PC-3 (cell line): ENCODE measurements at regions of chr20 and their contacts with region 1.

Region 1: DNA sequence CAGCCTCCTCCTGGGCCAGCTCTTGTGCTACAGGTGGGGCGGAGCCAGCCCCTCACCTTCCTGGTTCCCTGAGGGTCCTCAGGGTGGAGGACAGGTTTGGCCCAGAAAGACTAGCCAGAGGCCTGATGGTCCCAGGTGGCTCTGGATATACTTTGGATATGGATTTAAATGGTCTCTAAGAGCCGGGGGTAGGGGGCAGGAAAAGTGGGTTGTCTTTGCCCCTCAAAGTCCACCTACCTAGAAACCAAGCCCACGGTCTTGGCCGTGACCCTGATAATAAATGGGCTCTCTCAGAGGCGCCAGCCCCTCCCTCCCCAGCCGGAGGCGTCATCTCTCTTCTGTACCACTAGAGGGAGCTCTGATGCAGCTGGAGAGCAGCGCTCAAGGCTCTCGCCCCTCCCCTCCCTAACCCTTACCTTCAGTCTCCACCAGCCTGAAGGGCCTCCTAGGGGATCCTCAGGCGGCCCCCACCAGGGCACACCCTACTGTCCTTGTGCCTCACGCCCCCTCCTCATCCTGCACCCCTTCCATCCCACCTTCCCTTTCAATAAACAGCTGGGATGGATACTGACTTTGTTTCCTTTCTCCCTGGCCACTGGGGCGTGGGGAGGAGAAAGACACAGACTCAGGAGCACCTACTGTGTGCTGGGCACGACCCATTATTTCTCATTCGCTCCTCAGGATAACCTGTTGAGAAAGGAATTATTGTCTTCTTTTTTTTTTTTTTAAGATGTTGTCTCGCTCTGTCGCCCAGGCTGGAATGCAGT is 7.6 kb downstream of the NRSN2 start:
- DNase-seq: peak; percentile 93
- ATAC-seq: peak; percentile 93
- H3K4me3 ChIP-seq: no peak overlapping the region
- H3K27ac ChIP-seq: no peak overlapping the region
- H3K4me1 ChIP-seq: no peaks in the 10 kb centered on the region
- H3K27me3 ChIP-seq: no peaks in the 10 kb centered on the region
- CTCF ChIP-seq: peak; percentile 98

Region 2: DNA sequence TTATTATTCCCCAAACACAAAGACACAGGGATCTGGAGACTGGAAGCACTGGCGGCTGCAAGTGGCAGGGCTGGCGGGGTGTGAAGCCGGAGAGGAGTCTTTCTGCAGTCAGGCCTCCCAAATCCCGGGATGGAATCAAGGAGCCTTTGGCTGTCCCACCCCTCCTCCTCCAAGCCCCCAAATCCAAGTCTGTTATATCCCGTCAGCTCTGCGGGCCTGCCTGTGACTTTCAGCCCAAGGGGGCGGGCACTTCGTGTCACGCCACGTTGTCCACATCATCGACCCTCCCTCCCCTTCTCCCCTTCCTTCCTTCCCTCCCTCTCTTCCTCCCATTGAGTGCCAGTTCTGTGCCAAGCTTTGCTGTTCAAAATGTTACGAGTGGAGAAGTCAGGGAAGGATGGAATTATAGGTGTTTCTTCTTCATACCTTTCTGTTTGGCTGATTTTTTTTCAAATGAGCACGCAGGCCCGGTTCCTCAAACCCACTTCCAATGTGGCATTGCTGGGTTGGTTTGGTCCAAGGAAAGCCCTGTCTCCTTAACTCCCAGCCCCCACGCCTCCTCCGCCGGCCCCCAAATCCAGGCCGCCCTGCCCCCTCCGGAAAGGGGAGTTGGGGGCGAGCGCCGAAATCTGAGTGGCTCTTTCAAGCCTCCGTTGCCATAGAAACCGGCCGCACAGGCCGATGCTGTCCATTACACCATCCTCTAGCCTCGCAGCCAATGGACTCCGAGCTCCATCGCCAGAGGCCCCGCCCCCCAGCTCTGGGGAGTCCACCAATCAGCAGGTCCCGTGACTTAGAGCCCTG is 44.4 kb before region 1 on chr20:
- CTCF ChIA-PET with region 1: no interaction called
- POLR2A ChIA-PET with region 1: no interaction called
- intact Hi-C with region 1: no loop called
- DNase-seq: no peak
- ATAC-seq: no peak
- H3K4me3 ChIP-seq: no peak overlapping the region
- H3K27ac ChIP-seq: no peak overlapping the region
- H3K4me1 ChIP-seq: peaks cover 17% of the 10 kb centered on the region
- H3K27me3 ChIP-seq: no peaks in the 10 kb centered on the region
- CTCF ChIP-seq: no peak

Region 3: GRCh38 chr20:431012-431904 is 76.8 kb after region 1 on chr20:
- CTCF ChIA-PET with region 1: interaction called, 20 read pairs
- POLR2A ChIA-PET with region 1: no interaction called
- intact Hi-C with region 1: loop called (anchors 1 kb)
- DNase-seq: peak; percentile 91
- ATAC-seq: peak; percentile 82
- H3K4me3 ChIP-seq: no peak overlapping the region
- H3K27ac ChIP-seq: no peak overlapping the region
- H3K4me1 ChIP-seq: no peaks in the 10 kb centered on the region
- H3K27me3 ChIP-seq: no peaks in the 10 kb centered on the region
- CTCF ChIP-seq: peak; percentile 99

Region 4: DNA sequence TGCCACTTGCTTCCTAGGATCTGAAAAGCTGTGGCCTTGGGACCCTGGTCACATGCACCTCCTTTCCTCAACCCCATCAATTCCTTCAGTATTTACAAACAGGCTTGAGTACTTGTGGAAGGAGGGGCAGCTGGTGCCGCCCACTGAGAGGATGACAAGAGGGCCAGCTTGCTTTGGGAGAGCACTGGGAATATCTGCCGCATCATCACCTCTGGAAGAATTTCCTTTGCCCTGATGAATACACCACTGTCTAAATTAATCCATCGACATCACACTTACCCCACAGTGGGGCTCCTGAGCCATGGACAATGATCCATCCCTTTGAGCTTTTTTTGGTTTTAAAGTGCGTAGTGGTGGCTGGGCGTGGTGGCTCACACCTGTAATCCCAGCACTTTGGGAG is 82.0 kb after region 1 on chr20:
- CTCF ChIA-PET with region 1: interaction called, 20 read pairs
- POLR2A ChIA-PET with region 1: no interaction called
- intact Hi-C with region 1: loop called (anchors 1 kb)
- DNase-seq: no peak
- ATAC-seq: no peak
- H3K4me3 ChIP-seq: no peak overlapping the region
- H3K27ac ChIP-seq: no peak overlapping the region
- H3K4me1 ChIP-seq: no peaks in the 10 kb centered on the region
- H3K27me3 ChIP-seq: no peaks in the 10 kb centered on the region
- CTCF ChIP-seq: no peak

Region 5: GRCh38 chr20:478949-479429 is 124.5 kb after region 1 on chr20:
- CTCF ChIA-PET with region 1: no interaction called
- POLR2A ChIA-PET with region 1: no interaction called
- intact Hi-C with region 1: loop called (anchors 1 kb)
- DNase-seq: peak; percentile 84
- ATAC-seq: peak; percentile 69
- H3K4me3 ChIP-seq: no peak overlapping the region
- H3K27ac ChIP-seq: no peak overlapping the region
- H3K4me1 ChIP-seq: no peaks in the 10 kb centered on the region
- H3K27me3 ChIP-seq: no peaks in the 10 kb centered on the region
- CTCF ChIP-seq: peak; percentile 86